Sciatic nerve (tissue), 2 donors: ENCODE measurements at regions of chr14 and their contacts with region 1.

Region 1: DNA sequence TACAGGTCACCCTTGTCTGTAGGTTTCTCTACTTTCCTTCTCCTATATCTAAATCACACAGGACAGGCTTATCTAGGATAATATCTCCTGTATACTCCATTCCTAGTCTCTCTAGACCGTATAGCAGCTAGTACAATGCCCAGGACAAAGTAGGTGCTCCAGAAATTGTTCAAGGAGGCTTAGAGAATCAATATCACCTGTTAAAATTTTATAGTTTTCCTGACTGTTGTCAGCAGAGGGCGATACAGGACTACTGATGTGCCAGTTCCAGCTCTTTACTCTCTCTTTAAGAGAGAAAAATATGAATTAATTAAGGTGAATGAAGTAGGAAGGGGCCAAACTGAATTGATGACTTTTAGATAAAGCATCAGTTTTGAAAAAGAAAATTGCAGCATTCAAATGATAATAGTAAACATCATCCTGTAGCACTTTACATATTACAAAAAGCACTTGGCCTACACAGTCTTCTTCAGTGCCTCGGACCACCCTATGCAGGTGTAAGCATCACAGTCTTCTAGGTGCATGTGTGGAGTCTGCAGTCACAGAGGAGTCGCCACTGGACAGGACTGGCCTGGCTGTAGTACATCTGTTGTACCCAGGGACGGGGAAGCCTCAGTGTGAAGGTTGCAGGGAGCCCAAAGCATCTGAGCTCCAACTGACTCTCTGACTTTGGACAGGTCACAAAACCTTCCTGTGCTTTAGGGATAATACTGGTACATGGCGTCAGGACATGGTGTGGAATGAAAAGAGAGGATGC is 61.9 kb upstream of the MAX start:
- DNase-seq: no peak
- ATAC-seq: peak; percentile 59

Region 2: DNA sequence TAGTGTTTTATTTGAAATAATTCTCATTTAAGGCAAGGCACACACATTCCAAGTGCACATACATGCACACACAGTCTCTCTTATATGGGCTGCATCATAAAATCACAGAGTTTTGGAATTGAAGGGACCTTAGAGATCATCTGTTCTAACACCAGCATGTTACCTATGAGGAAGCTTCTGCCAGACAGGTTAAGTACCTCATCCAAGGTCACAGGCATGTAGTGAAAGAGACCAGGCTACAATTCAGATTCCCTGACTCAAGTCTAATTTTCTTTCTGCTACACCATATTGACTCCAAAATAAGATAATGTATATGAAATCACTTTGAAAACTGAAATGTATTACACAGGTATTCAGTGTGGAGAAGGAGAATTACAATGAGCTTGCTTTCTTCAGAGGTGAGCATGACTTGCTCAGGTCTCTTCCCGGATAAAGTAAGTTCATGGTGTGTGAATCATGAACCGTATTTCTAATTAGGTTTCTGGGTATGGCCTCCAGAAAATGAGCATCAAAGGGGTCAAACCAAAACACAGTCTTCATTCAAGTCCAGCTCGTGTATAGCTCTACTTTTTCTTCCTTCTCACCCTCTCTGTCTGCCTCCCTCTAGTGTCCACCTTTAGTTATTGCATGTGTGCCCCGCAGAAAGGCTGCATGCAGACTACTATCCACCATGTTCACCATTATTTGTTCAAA is 660.2 kb after region 1 on chr14:
- intact Hi-C with region 1: loop called (anchors 10 kb)
- DNase-seq: peak; percentile 67
- ATAC-seq: peak; percentile 86

Region 3: DNA sequence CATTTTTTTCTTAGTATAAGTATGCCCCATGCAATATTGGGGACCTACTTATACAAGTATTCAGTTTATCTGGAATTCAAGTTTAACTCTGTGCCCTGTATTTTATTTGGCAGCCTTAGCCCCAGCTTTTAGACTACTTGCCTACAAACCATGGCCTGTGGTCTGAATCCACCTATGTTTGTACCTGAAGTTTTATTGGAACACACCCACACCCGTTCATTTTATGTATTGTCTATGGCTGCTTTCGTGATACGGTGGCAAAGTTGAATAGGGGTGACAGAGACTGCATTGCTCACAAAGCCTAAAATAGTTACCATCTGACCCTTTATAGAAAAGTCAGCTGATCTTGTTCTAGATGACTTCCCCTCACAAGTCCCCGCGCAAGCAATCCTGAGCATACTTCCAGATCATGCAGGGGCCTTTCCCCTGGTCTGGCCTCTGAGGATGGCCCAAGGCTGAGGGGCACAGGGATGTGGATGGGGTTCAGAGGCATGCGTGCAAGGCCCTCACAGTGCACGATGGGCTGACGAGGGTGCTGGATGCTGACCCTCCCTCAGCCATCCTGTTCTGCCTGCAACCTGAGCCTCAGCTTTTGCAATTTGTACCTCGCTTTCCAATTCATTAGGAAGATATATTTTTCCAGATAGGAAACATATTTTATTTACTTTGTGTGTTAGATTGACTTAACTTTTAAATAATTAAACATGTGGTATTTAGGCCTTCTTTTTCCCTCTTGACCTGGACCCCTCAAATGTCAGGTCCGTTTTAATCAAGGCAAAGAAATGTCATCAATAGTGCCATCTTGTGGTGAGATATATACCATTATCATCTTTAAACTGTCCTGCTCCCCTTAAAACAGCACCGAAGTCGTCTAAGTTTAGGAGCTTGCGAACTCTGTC is 794.7 kb after region 1 on chr14:
- intact Hi-C with region 1: loop called (anchors 5 kb)
- DNase-seq: no peak
- ATAC-seq: peak; percentile 49